GM13976 (cell line): ENCODE measurements at regions of chr12 and their contacts with region 1.

Region 1: DNA sequence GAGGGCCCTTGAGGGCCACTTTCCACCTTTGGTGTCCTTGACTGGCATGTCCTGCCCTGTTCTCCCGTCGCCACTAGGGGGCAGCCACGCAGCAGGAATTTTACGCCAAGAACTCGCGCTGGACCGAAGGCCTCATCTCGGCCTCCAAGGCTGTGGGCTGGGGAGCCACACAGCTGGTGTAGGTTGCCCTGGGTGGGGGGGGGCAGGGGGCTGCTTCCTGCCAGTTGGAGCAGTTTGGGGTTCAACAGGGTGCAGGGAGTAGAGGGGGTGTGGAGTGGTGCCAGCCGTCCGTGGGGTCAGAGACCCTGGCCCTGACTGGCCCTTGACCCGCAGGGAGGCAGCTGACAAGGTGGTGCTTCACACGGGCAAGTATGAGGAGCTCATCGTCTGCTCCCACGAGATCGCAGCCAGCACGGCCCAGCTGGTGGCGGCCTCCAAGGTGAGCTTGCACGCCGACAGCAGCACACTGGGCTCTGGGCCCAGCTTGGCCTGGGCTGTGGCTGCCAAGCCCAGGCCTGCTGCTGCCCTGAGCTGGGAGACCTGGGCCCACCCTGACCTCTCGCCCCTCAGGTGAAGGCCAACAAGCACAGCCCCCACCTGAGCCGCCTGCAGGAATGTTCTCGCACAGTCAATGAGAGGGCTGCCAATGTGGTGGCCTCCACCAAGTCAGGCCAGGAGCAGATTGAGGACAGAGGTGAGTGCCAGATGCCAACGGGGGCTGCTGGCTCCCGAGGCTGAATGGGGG is 25.3 kb downstream of the HIP1R start:
- DNase-seq: peak; percentile 92
- CTCF ChIP-seq: peak; percentile 87

Region 2: DNA sequence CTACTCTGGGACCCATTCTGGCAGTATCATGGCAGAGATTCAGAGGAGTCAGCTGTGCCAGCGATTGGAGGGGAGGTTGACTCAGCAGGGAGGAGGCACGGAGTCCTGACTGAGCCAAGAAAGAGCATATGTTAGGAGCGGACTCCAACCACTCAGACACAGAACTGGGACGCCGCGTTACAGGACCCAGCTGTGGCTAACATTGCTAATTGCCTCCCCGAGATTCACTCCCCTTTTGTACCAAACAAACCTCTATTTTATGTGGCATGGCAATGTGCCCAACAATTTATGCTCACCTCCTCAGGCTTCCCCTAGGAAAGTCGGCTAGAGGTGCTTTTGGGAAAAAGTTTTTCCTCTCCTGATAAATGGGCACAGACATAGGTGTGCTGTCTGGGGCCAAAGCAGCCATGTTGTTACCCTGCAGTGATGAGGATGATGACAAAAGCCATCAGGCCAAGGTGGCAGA is 422.8 kb before region 1 on chr12:
- in situ Hi-C with region 1: no loop called
- DNase-seq: no peak
- CTCF ChIP-seq: no peak

Region 3: GRCh38 chr12:122740351-122740750 is 120.2 kb before region 1 on chr12:
- in situ Hi-C with region 1: no loop called
- DNase-seq: no peak
- CTCF ChIP-seq: no peak

Region 4: DNA sequence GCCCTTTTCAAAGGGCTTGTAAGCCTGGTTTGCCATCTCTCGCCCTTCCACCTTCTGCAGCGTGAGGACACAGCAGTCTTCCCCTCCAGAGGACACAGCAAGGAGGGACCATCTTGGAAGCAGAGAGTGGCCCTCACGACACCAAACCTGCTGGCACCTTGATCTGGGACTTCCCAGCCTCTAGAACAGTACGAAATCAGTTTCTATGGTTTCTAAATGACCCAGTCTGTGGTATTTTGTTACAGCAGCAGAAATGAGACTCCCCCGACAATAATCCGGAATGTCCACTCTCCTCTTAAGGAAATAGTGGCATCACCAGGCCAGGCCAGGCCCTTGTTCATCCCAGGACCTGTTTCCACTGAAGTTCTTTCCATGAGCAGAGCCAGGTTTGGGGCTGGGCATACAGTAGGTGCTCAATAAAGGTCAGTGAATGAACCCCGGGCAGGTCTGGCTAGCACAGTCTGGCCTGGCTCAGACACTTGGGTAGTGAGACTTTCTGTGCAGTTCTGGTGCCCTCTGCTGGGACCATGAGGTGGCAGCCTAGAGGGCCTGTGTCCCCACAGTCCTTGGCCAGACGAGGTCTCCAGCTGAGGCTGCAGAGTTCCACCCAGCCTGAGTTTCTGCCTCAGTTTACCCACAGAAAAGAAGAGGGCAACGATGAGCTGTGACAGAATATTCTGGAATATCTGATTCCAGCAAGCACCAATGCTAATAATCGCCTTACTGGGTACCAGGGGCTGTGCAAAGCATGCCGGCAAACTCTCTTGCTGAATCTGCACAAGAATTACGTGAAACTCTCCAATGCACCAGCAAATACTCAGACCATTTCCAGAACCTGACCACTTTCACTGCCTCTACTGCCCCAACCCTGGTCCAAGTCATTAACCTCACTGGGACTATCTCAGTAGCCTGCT is 91.7 kb after region 1 on chr12:
- in situ Hi-C with region 1: loop called (anchors 5 kb)
- DNase-seq: peak; percentile 88
- CTCF ChIP-seq: peak; percentile 89

Region 5: GRCh38 chr12:123232807-123233543 is 372.5 kb after region 1 on chr12 and contains the starts of genes MPHOSPH9 and MTRFR:
- in situ Hi-C with region 1: loop called (anchors 25 kb)
- DNase-seq: peak; percentile 96
- CTCF ChIP-seq: no peak